ENCODE measurements at regions of chr14 and their contacts with region 1.

Region 1: GRCh38 chr14:103391048-103391447 is 5.8 kb downstream of the MARK3 start:
- DNase-seq: peak in 33 of 35 experiments; percentile 8 to 72 (median 42)
- ATAC-seq: peak; percentile 72 to 79 (median 78)
- H3K4me3 ChIP-seq: no peak overlapping the region
- H3K4me3 Mint-ChIP-seq: no peak overlapping the region
- H3K27ac ChIP-seq: peak overlapping the region; percentile 36
- H3K27ac Mint-ChIP-seq: peak overlapping the region in 1 of 2 donors; percentile 73
- H3K4me1 ChIP-seq: peaks cover 35 to 66% of the 10 kb centered on the region in 2 experiments
- H3K4me1 Mint-ChIP-seq: peaks cover 66 to 78% (median 73%) of the 10 kb centered on the region in 3 donors
- H3K27me3 ChIP-seq: no peaks in the 10 kb centered on the region
- H3K27me3 Mint-ChIP-seq: no peaks in the 10 kb centered on the region

Region 2: GRCh38 chr14:103346286-103346685 is 44.8 kb before region 1 on chr14:
- CTCF ChIA-PET with region 1: interaction called in 1 of 2 experiments, 13 read pairs
- POLR2A ChIA-PET with region 1: interaction called in 1 of 2 experiments, 9 read pairs
- DNase-seq: no peak
- ATAC-seq: no peak
- H3K4me3 ChIP-seq: no peak overlapping the region
- H3K4me3 Mint-ChIP-seq: no peak overlapping the region
- H3K27ac ChIP-seq: no peak overlapping the region
- H3K27ac Mint-ChIP-seq: no peak overlapping the region
- H3K4me1 ChIP-seq: no peaks in the 10 kb centered on the region
- H3K4me1 Mint-ChIP-seq: peaks cover 8 to 17% (median 9%) of the 10 kb centered on the region in 3 donors
- H3K27me3 ChIP-seq: no peaks in the 10 kb centered on the region
- H3K27me3 Mint-ChIP-seq: peaks cover 0 to under 1% of the 10 kb centered on the region in 2 donors

Region 3: DNA sequence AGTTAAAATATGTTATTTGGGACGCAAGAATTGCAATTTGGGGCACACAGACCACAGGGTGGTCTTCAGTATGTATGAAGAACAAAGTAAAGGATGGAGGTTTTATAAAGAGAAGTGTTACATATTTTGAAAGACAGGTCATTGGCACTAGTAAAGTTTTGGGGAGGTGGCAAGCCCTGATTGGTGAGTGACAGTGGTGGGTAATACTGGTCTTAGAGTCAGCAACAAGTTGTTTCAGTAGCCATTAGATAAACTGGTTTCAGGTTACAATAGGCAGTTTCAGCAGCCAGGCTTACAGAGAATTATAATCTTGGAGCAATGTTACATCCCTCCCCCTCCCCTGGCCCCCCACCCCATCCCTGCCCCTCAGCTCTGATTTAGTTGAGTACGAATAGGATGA is 11.6 kb after region 1 on chr14:
- CTCF ChIA-PET with region 1: interaction called, 3 to 12 read pairs
- POLR2A ChIA-PET with region 1: no interaction called
- DNase-seq: no peak
- ATAC-seq: no peak
- H3K4me3 ChIP-seq: no peak overlapping the region
- H3K4me3 Mint-ChIP-seq: peak overlapping the region in 1 of 3 donors; percentile 37
- H3K27ac ChIP-seq: no peak overlapping the region
- H3K27ac Mint-ChIP-seq: no peak overlapping the region
- H3K4me1 ChIP-seq: peaks cover 23 to 26% of the 10 kb centered on the region in 2 experiments
- H3K4me1 Mint-ChIP-seq: peaks cover 62 to 69% (median 65%) of the 10 kb centered on the region in 3 donors
- H3K27me3 ChIP-seq: no peaks in the 10 kb centered on the region
- H3K27me3 Mint-ChIP-seq: no peaks in the 10 kb centered on the region

Measured in T-cell (primary cell).